ENCODE measurements at regions of chr14 and their contacts with region 1.

Region 1: GRCh38 chr14:23301288-23301968 is 1.2 kb downstream of the PPP1R3E start:
- DNase-seq: peak; percentile 99
- H3K27ac ChIP-seq: peak overlapping the region; percentile 96
- CTCF ChIP-seq: peak; percentile 93

Region 2: DNA sequence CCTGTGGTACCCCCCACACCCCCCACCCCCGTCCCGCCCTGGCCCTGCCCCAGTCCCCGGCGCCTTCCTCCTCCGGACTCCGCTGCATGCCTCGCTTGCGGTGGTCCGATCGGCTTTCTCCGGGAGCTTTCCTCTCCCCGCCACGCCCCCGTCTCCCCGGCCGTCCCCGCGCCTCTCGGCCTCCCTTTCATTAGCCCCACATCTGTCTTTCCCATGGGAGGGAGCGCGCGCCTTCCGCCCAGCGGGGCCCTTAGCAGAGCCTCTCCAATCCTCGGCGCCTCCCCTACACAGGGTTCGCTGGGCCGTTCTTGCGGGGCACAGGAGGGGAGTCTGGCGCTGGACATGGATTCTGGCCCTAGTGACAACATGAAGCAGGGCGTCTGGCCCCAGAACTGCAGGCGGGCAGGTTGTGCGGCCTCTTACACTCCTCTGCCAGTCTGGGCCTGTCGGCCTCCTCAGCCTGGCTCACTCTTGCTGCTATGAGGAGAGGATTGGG is 65.0 kb after region 1 on chr14:
- CTCF ChIA-PET with region 1: interaction called, 10 read pairs
- POLR2A ChIA-PET with region 1: no interaction called
- DNase-seq: peak; percentile 80
- H3K27ac ChIP-seq: peak overlapping the region; percentile 97
- CTCF ChIP-seq: no peak

Region 3: DNA sequence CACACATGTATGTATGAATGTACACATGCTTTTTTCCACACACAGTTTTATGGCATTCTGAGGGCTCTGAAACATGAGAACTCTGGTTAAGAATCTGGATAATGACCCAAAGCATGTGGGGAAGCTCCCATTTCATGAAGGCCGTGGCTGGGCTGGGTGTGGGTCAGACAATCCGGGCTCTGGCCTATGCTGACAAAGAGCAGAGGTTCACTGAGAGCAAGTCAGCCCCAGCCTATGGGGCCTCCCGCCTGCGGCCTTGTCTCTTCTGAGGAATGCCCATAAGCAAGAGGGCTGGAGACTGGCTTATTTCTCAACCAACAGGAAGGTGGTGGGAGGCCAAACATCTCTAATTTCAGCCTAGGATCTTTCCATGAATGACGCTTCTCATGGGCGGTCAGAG is 98.2 kb after region 1 on chr14:
- CTCF ChIA-PET with region 1: no interaction called
- POLR2A ChIA-PET with region 1: no interaction called
- DNase-seq: no peak
- H3K27ac ChIP-seq: no peak overlapping the region
- CTCF ChIP-seq: no peak

Measured in RWPE1 (cell line).